ENCODE measurements at regions of chr1 and their contacts with region 1.

Region 1: DNA sequence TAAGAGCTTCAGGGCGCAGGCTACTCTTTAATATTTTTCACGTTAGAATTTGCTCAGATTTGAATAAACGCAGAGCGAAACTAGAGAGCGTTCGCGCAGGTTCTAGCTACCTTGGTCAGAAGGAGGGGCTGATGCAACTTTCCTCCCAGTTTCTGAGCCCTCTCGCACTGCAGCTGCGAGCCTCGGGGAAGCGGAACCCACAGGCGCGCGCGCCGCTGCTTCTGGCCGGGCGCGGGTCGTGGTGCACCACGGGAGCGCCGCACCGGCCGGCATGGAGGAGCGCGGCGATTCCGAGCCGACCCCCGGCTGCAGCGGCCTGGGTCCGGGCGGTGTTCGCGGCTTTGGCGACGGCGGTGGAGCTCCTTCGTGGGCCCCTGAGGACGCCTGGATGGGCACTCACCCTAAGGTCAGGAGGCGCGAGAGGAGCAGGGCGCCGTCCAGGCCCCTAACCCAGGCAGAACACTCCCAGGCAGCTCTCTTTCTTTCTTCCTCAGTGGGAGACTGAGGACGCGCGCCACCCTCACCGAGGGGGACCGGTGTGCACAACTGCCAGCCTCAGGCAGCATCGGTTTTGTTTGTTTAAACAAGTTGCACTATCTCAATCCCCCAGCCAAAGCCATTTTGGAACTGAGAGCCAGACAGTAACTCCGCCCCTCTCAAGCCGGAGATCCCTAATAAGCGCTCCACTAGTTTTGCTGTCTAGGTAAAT is at the start of gene TSEN15:
- DNase-seq: peak; percentile 93
- H3K4me3 Mint-ChIP-seq: peak within 1 kb of the TSS; percentile 96
- H3K27ac Mint-ChIP-seq: peak within 1 kb of the TSS; percentile 98
- H3K4me1 Mint-ChIP-seq: peaks cover 30% of the 10 kb centered on the region
- H3K27me3 Mint-ChIP-seq: peaks cover 25% of the 10 kb centered on the region
- total RNA-seq, gene TSEN15: 44.9 and 48.3 TPM in 2 replicates

Region 2: DNA sequence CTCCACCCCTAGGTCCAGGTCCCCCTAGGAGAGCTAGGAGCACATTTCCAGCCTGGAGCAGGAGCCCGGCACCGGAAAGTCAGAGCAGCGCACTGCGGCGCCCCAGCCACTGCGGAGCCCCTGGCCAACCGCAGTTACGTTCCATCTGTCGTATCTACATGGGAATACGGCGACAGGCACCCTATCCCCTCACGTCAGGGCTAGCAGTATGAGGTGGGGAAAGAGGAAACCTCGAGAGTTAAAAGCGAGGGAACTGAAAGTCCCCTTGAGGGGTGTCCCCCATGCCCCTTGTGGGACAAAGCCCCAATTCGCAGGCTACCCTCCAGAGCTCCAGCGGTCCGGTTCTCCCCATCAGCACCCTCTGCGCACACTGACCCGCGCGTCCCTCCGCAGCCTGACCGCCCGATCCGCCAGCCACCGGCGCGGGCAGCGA is 15.1 kb before region 1 on chr1:
- intact Hi-C with region 1: loop called (anchors 1 kb)
- DNase-seq: peak; percentile 64
- H3K4me3 Mint-ChIP-seq: peak overlapping the region; percentile 69
- H3K27ac Mint-ChIP-seq: no peak overlapping the region
- H3K4me1 Mint-ChIP-seq: peaks cover 14% of the 10 kb centered on the region
- H3K27me3 Mint-ChIP-seq: peaks cover 71% of the 10 kb centered on the region

Region 3: DNA sequence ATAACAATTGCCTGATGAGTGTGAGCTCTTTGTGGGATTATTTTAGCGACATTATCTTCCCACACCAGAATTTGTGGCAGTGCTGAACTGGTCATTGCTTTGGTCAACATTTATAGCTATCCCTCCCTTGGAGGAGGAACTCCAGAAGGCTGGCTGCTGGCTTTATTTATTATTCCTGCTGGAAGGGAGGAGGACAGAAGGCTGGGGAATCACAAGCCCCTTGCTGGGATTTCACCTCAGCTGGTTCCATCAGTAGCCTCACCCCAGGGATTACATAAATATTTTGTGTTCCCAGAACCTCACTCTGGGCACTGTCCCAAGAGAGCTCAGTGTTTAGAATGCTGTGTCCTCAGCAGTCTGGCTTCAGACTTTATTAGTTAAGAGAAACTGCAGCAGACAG is 232.4 kb after region 1 on chr1:
- intact Hi-C with region 1: no loop called
- DNase-seq: no peak
- H3K4me3 Mint-ChIP-seq: no peak overlapping the region
- H3K27ac Mint-ChIP-seq: no peak overlapping the region
- H3K4me1 Mint-ChIP-seq: no peaks in the 10 kb centered on the region
- H3K27me3 Mint-ChIP-seq: no peaks in the 10 kb centered on the region

Measured in activated CD4-positive, alpha-beta T cell treated with anti-CD3 and anti-CD28 coated beads, Interleukin-2, amount 10 ng/mL, durations not matched to agents 24 days and 14 days (primary cell).